ENCODE measurements at regions of chr17 and their contacts with region 1.

Region 1: GRCh38 chr17:35242805-35243560 is at the start of gene SLFN5:
- DNase-seq: peak; percentile 96
- H3K4me3 Mint-ChIP-seq: peak within 1 kb of the TSS; percentile 95
- H3K27ac Mint-ChIP-seq: peak within 1 kb of the TSS; percentile 96
- H3K4me1 Mint-ChIP-seq: peaks cover 60% of the 10 kb centered on the region
- H3K27me3 Mint-ChIP-seq: no peaks in the 10 kb centered on the region
- total RNA-seq, gene SLFN5: 231 to 240 TPM

Region 2: DNA sequence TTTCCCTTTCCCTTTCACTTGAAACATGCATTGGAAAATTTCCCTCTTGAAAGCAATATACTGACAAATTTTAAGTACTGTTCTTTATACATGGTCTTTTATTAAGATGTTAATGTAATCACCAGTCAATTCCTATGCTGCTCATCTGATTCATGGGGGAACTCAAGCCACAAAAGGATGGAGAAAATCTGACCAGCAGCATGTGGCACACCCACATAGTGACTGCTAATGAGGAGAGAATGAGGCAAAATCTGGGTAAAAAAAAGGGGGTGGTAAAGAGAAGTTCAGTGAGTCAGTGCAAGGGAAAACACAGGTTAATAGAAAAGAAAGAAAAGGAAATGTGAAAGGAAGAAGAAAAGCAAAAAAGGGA is 190.8 kb before region 1 on chr17:
- CTCF ChIA-PET with region 1: no interaction called
- POLR2A ChIA-PET with region 1: no interaction called
- DNase-seq: no peak
- H3K4me3 Mint-ChIP-seq: peak overlapping the region; percentile 42
- H3K27ac Mint-ChIP-seq: peak overlapping the region; percentile 88
- H3K4me1 Mint-ChIP-seq: peaks cover 58% of the 10 kb centered on the region
- H3K27me3 Mint-ChIP-seq: no peaks in the 10 kb centered on the region

Region 3: GRCh38 chr17:35119368-35120165 is 123.4 kb before region 1 on chr17 and contains the start of gene RAD51D:
- CTCF ChIA-PET with region 1: no interaction called
- POLR2A ChIA-PET with region 1: interaction called, 11 read pairs
- DNase-seq: peak; percentile 83
- H3K4me3 Mint-ChIP-seq: peak within 1 kb of the TSS; percentile 79
- H3K27ac Mint-ChIP-seq: peak within 1 kb of the TSS; percentile 78
- H3K4me1 Mint-ChIP-seq: peaks cover 41% of the 10 kb centered on the region
- H3K27me3 Mint-ChIP-seq: no peaks in the 10 kb centered on the region
- total RNA-seq, gene RAD51D: 25.6 to 25.9 TPM

Region 4: GRCh38 chr17:35170968-35171771 is 71.8 kb before region 1 on chr17:
- CTCF ChIA-PET with region 1: interaction called, 4 read pairs
- POLR2A ChIA-PET with region 1: interaction called, 149 read pairs
- DNase-seq: no peak
- H3K4me3 Mint-ChIP-seq: no peak overlapping the region
- H3K27ac Mint-ChIP-seq: peak overlapping the region; percentile 26
- H3K4me1 Mint-ChIP-seq: peaks cover 23% of the 10 kb centered on the region
- H3K27me3 Mint-ChIP-seq: no peaks in the 10 kb centered on the region

Region 5: GRCh38 chr17:35312790-35313711 is 70.1 kb after region 1 on chr17:
- CTCF ChIA-PET with region 1: interaction called, 6 read pairs
- POLR2A ChIA-PET with region 1: interaction called, 28 read pairs
- DNase-seq: peak; percentile 84
- H3K4me3 Mint-ChIP-seq: peak overlapping the region; percentile 83
- H3K27ac Mint-ChIP-seq: peak overlapping the region; percentile 90
- H3K4me1 Mint-ChIP-seq: peaks cover 42% of the 10 kb centered on the region
- H3K27me3 Mint-ChIP-seq: peaks cover 3% of the 10 kb centered on the region

Region 6: DNA sequence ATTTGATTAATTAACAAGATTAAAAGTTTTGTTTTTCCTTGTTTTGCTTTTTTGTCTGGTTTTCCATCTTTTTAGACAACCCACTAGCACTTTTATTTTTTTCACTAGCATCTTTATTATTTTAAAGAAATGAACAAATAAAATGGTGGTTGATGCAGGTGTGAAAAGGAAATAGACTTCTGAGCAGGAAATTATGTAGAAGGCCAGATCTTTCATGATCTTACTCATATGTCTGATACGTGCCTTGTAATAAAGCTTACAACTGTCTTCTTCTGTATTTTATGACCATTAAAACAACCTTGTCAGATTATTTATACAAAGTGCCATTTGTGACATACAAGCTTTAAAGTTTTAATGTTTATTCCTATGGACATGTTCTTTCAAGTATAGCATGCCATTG is 288.2 kb after region 1 on chr17:
- CTCF ChIA-PET with region 1: interaction called, 8 read pairs
- POLR2A ChIA-PET with region 1: interaction called, 328 read pairs
- DNase-seq: no peak
- H3K4me3 Mint-ChIP-seq: peak overlapping the region; percentile 65
- H3K27ac Mint-ChIP-seq: peak overlapping the region; percentile 71
- H3K4me1 Mint-ChIP-seq: peaks cover 62% of the 10 kb centered on the region
- H3K27me3 Mint-ChIP-seq: no peaks in the 10 kb centered on the region

Region 7: DNA sequence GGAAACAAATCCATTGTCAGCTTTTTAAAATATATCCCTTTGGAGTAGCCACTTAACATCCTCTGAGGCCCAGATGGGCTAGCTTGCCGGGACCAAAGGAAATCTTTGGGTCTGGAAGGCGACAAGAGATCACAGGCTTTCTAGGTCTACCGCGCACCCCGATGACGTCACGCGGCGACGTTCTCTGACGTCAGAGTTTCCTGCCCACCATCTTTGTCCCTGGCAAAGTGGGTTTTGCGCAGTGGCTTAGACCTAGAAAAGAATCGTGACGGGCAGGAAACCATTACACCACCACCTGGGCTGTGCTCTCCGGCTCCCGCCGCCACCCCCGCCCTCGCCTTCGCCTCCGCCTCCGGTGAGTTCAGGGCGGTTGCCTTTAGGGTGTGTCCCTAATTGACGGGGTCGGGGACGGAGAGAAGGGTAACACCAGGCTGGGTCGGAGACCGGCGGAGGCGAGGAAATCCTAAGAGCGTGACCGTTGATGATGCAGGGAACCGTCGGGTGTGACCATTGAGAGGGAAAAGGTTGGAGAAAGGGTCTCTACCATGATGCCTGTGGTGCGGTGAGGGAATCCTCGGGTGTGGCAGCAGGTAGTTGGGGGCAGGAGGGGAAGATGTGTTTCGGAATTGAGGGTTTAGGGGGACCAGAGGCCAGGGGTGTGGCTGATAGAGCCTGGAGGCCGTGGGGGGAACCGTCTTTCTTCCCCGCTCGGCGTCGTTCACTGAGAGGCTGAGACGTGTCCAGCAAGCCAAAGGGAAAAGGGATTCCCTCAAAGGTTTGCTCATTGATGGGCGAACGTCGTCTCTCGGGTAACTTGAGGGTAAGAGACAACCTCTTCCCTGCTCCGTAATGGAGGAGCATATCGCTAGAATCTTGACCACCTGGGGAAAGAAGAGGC is 344.3 kb after region 1 on chr17 and contains the start of gene AP2B1:
- CTCF ChIA-PET with region 1: no interaction called
- POLR2A ChIA-PET with region 1: interaction called, 17 read pairs
- DNase-seq: peak; percentile 98
- H3K4me3 Mint-ChIP-seq: peak within 1 kb of the TSS; percentile 96
- H3K27ac Mint-ChIP-seq: peak within 1 kb of the TSS; percentile 97
- H3K4me1 Mint-ChIP-seq: peaks cover 38% of the 10 kb centered on the region
- H3K27me3 Mint-ChIP-seq: peaks cover 11% of the 10 kb centered on the region
- total RNA-seq, gene AP2B1: 196 to 203 TPM

Measured in activated CD4-positive, alpha-beta memory T cell treated with anti-CD3 and anti-CD28 coated beads, Interleukin-2, amount 10 ng/mL, durations not matched to agents 7 days and 5 days (primary cell).